Activated CD4-positive, alpha-beta memory T cell treated with anti-CD3 and anti-CD28 coated beads for 36 hours (primary cell): ENCODE measurements at regions of chr2 and their contacts with region 1.

Region 1: DNA sequence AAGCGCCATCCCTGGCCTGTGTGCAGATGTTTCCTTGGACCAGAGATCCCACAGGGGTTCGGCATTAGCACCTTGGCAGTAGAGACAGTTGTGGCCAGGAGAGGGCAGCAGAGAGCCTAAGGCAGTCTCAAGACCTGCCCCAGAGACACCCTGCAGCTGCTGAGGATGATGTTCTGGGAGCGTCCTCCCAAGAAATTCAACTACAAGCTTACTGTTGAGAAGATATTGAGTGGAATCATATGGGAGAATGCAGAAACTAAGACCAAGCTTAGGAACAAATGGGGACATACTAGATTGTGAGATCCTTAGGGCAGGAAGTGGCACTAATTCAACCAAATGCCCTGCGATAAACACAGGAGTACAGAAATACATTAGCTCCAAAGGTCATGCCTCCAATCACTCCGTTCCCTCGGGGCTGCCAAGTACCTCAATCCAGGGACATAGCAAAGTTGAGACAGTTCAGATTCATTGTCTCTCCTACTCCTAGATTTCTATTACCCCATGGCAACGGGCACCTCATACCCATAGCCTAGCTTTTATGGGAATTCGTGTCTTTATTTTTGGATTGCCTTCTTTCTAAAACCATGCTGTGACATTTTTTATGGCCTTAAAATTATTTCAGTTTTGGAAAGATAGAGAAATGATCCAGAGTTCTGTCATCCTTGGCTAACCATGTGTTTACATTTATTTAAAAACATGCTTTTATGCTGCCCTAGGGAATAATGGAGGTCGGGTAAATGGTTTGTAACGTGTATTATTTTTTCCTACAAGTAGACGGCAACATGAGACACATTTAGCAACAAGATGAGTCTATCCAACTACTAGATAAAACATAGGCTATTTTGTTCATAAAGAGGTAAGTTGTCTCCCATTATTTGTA is 2.2 kb upstream of the ERMN start:
- DNase-seq: peak; percentile 91
- H3K4me3 Mint-ChIP-seq: peak overlapping the region; percentile 28
- H3K27ac Mint-ChIP-seq: no peak overlapping the region
- H3K4me1 Mint-ChIP-seq: peaks cover 46% of the 10 kb centered on the region
- H3K27me3 Mint-ChIP-seq: no peaks in the 10 kb centered on the region

Region 2: GRCh38 chr2:157404363-157404762 is 76.5 kb after region 1 on chr2:
- CTCF ChIA-PET with region 1: interaction called, 29 read pairs
- POLR2A ChIA-PET with region 1: interaction called, 8 read pairs
- intact Hi-C with region 1: loop called (anchors 1 kb)
- DNase-seq: peak; percentile 73
- H3K4me3 Mint-ChIP-seq: no peak overlapping the region
- H3K27ac Mint-ChIP-seq: peak overlapping the region; percentile 78
- H3K4me1 Mint-ChIP-seq: peaks cover 68% of the 10 kb centered on the region
- H3K27me3 Mint-ChIP-seq: no peaks in the 10 kb centered on the region

Region 3: DNA sequence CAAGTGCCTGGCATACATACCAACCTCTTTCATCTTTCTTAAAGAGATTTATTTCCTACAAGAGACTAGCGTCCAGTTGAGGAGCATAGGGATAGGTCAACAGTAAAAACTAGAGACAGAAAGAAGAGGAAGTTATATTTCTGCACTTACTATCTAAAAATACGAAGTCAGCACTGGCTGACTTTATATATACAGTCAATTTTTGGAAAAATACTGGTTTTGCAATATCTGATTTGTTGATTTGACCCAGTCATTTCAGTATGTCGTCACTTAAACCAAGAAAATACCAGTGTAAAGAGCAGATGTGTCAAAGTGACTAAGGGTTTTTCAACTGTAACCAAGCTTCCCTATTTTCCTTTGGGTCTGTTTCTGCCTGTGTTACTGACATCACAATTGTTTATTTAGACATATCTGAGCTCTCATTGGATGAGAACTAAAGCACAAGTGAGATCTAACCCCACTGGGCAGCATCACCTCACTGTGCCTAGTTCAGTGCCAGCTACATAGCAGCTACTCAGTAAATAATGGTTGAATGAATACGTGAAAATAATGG is 93.0 kb after region 1 on chr2:
- CTCF ChIA-PET with region 1: interaction called, 45 read pairs
- POLR2A ChIA-PET with region 1: interaction called, 9 read pairs
- intact Hi-C with region 1: no loop called
- DNase-seq: peak; percentile 61
- H3K4me3 Mint-ChIP-seq: peak overlapping the region; percentile 38
- H3K27ac Mint-ChIP-seq: peak overlapping the region; percentile 97
- H3K4me1 Mint-ChIP-seq: peaks cover 74% of the 10 kb centered on the region
- H3K27me3 Mint-ChIP-seq: no peaks in the 10 kb centered on the region

Region 4: GRCh38 chr2:157443795-157444640 is 116.2 kb after region 1 on chr2 and contains the start of gene CYTIP:
- CTCF ChIA-PET with region 1: interaction called, 48 read pairs
- POLR2A ChIA-PET with region 1: interaction called, 8 read pairs
- intact Hi-C with region 1: no loop called
- DNase-seq: peak; percentile 82
- H3K4me3 Mint-ChIP-seq: peak within 1 kb of the TSS; percentile 92
- H3K27ac Mint-ChIP-seq: peak within 1 kb of the TSS; percentile 99
- H3K4me1 Mint-ChIP-seq: peaks cover 37% of the 10 kb centered on the region
- H3K27me3 Mint-ChIP-seq: peaks cover 2% of the 10 kb centered on the region
- total RNA-seq, gene CYTIP: 369 to 388 TPM

Region 5: GRCh38 chr2:157468931-157469708 is 141.3 kb after region 1 on chr2:
- CTCF ChIA-PET with region 1: interaction called, 16 read pairs
- POLR2A ChIA-PET with region 1: no interaction called
- intact Hi-C with region 1: loop called (anchors 1 kb)
- DNase-seq: no peak
- H3K4me3 Mint-ChIP-seq: peak overlapping the region; percentile 69
- H3K27ac Mint-ChIP-seq: peak overlapping the region; percentile 99
- H3K4me1 Mint-ChIP-seq: peaks cover 91% of the 10 kb centered on the region
- H3K27me3 Mint-ChIP-seq: no peaks in the 10 kb centered on the region

Region 6: GRCh38 chr2:157492189-157492773 is 164.4 kb after region 1 on chr2:
- CTCF ChIA-PET with region 1: interaction called, 57 read pairs
- POLR2A ChIA-PET with region 1: no interaction called
- intact Hi-C with region 1: no loop called
- DNase-seq: peak; percentile 83
- H3K4me3 Mint-ChIP-seq: no peak overlapping the region
- H3K27ac Mint-ChIP-seq: no peak overlapping the region
- H3K4me1 Mint-ChIP-seq: peaks cover 55% of the 10 kb centered on the region
- H3K27me3 Mint-ChIP-seq: no peaks in the 10 kb centered on the region

Region 7: DNA sequence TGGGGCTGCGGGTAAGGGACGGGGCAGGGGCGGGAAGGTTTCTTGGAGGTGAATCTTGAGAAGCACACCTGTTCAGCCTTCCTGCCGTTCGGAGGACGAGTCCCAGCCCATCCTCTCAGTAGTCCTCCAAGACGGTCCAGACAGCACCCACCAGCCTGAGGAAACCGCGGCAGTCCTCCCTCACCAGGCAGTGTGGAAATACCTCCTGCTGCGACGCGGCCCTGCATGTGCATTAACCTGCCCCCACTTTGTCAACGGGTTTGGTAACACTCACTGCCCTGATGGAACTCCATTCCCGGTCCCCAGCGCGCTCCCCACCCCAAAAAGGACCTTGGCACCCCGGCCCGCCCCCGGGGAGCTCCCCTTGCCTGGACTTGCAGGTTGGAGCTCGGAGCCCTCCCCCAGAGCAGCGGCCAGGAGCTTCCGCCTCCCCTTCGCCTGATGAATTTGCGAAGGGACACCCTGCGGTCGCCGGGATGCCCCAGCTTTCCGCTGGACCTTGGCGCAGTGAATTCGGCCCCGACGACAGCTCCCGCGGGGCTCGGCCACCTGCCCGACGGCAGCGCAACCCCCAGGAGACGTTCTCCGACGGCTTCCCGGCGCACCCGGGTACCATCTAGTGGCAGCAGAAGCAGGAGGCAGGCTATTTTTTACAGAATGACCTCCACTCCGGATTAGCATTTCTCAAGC is 269.3 kb after region 1 on chr2:
- CTCF ChIA-PET with region 1: interaction called, 15 read pairs
- POLR2A ChIA-PET with region 1: no interaction called
- intact Hi-C with region 1: loop called (anchors 1 kb)
- DNase-seq: peak; percentile 72
- H3K4me3 Mint-ChIP-seq: peak overlapping the region; percentile 61
- H3K27ac Mint-ChIP-seq: no peak overlapping the region
- H3K4me1 Mint-ChIP-seq: peaks cover 11% of the 10 kb centered on the region
- H3K27me3 Mint-ChIP-seq: peaks cover 4% of the 10 kb centered on the region